ENCODE measurements at regions of chr2 and their contacts with region 1.

Region 1: DNA sequence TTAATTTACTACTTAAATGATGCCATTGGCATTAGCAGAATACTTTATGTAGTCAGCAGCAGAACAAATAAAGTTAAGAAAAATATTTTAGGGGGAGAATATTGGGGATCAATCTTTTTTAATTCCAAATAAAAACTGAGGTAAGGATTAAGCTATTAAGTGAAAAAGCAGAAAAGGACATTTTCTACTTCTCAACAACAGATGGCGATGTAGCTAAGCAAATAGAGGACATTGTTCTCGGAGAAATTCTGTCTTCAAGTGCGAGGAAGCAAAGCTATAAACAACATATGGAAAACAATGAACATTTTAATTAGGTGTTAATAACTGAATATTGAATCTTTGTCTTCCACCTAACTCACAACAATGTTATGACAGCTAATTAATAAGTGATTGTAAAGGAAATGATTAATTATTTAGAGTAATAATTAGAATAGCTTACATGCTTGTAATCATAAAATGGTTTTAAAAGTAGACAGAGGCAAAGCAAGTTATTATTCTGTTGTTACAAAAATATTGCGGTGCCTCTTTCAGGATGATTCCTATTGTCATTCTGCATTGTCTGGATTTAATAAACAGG is 32.9 kb upstream of the CCDC93 start:
- DNase-seq: peak; percentile 58
- H3K4me3 ChIP-seq: no peak overlapping the region
- H3K27ac ChIP-seq: no peak overlapping the region
- H3K4me1 ChIP-seq: peaks cover 21% of the 10 kb centered on the region
- H3K27me3 ChIP-seq: no peaks in the 10 kb centered on the region
- CTCF ChIP-seq: peak; percentile 69

Region 2: GRCh38 chr2:118019821-118020220 is 26.9 kb before region 1 on chr2:
- CTCF ChIA-PET with region 1: interaction called, 10 read pairs
- POLR2A ChIA-PET with region 1: no interaction called
- intact Hi-C with region 1: no loop called
- DNase-seq: no peak
- H3K4me3 ChIP-seq: no peak overlapping the region
- H3K27ac ChIP-seq: no peak overlapping the region
- H3K4me1 ChIP-seq: peaks cover 2% of the 10 kb centered on the region
- H3K27me3 ChIP-seq: no peaks in the 10 kb centered on the region
- CTCF ChIP-seq: no peak

Region 3: GRCh38 chr2:118202707-118203303 is 156.1 kb after region 1 on chr2:
- CTCF ChIA-PET with region 1: interaction called, 5 read pairs
- POLR2A ChIA-PET with region 1: no interaction called
- intact Hi-C with region 1: loop called (anchors 5 kb)
- DNase-seq: peak; percentile 72
- H3K4me3 ChIP-seq: no peak overlapping the region
- H3K27ac ChIP-seq: no peak overlapping the region
- H3K4me1 ChIP-seq: no peaks in the 10 kb centered on the region
- H3K27me3 ChIP-seq: no peaks in the 10 kb centered on the region
- CTCF ChIP-seq: peak; percentile 89

Region 4: GRCh38 chr2:118221666-118222594 is 175.2 kb after region 1 on chr2:
- CTCF ChIA-PET with region 1: no interaction called
- POLR2A ChIA-PET with region 1: no interaction called
- intact Hi-C with region 1: loop called (anchors 5 kb)
- DNase-seq: peak; percentile 71
- H3K4me3 ChIP-seq: no peak overlapping the region
- H3K27ac ChIP-seq: no peak overlapping the region
- H3K4me1 ChIP-seq: peaks cover 19% of the 10 kb centered on the region
- H3K27me3 ChIP-seq: peaks cover 13% of the 10 kb centered on the region
- CTCF ChIP-seq: peak; percentile 77

Measured in A673 (cell line).